ENCODE measurements at regions of chr14 and their contacts with region 1.

Region 1: GRCh38 chr14:95515596-95516552 is 576 bp downstream of the SYNE3 start:
- DNase-seq: peak; percentile 69

Region 2: DNA sequence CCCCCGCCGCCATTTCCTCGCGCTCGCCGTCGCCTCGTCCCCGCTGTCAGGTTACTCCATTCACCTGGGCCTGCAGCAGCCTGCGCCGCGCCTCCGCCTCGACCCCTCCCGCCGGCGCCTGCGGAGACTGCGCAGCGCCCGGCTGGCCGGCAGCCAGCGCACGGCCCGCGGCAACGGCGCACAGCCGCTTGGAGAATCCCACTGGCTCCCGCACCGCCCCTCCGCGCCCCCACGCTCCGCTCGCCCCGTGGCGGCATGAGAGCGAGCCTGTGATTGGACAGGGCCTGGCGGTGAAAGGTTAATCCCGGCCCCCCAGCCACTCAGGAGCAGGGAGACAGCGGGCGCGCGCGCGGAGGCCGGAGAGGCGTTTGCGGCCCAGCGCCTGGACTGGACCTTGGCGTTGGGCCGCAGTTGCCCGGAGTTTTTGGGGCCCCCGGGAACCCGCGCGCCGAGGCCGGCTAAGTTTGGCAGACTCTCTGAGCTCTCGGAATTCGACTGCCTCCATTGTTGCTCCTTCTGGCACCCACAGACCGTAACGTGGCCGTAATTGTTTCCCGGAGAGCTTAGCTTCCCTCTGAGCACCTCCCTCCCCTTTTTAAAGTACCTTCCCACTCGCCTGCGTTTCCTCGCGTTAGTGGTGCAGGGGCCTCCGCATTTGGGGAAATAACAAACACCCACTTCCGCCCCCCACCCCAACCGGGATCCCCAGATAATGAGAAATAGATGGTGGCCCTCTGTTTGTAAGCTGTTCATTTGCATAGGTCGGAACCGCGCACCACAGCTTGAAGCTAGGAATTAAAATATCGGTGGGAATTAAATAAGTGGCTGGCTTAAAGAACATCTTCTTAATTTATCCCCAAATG is 358.3 kb before region 1 on chr14 and contains the start of gene DICER1:
- CTCF ChIA-PET with region 1: no interaction called
- POLR2A ChIA-PET with region 1: no interaction called
- DNase-seq: peak; percentile 97

Region 3: GRCh38 chr14:95374239-95374997 is 141.5 kb before region 1 on chr14:
- CTCF ChIA-PET with region 1: no interaction called
- POLR2A ChIA-PET with region 1: no interaction called
- DNase-seq: no peak

Region 4: DNA sequence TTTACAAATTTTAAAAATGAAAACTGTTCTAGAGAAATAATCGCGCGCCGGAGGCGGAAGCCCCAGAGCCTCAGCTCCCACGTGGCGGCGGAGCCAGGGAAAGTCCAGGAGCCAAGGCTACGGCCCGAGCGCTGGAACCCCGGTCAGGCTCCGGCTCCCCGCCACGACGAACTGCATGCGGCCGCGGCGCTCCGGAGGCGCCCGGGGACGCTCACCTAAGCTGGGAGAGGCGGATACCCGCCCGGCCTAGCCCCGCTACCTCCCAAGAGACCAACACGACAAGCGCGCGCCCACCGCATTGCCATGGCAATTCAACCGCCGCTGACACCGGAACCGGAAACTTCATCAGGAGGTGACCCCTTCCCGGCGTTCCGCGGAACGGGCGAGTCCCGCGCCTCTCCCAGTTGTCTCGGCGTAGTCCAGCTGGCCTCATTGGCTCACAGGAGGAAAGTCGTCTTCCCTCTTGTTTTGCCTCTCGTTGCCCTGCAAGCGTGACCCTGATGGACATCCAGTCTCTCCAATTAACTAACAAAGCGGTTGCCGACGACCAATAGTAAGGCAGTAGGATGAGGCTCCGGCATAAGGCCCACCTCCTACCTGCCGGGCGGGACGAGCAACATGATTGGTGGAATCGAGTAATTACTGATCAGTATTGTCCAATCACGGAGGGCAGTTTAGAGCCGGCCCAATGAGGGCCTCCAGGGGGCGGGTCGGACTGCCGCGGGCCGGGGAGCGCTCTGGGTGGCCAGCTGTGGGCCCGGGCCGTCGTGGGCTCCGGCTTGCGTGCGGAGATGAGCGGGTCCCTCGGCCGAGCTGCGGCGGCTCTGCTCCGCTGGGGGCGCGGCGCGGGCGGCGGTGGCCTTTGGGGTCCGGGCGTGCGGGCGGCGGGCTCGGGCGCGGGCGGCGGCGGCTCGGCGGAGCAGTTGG is 18.7 kb after region 1 on chr14 and contains the start of gene GLRX5:
- CTCF ChIA-PET with region 1: no interaction called
- POLR2A ChIA-PET with region 1: interaction called, 15 read pairs
- DNase-seq: peak; percentile 94

Measured in HEK293T (cell line).